Endothelial cell of umbilical vein (primary cell): ENCODE measurements at regions of chr6 and their contacts with region 1.

Region 1: DNA sequence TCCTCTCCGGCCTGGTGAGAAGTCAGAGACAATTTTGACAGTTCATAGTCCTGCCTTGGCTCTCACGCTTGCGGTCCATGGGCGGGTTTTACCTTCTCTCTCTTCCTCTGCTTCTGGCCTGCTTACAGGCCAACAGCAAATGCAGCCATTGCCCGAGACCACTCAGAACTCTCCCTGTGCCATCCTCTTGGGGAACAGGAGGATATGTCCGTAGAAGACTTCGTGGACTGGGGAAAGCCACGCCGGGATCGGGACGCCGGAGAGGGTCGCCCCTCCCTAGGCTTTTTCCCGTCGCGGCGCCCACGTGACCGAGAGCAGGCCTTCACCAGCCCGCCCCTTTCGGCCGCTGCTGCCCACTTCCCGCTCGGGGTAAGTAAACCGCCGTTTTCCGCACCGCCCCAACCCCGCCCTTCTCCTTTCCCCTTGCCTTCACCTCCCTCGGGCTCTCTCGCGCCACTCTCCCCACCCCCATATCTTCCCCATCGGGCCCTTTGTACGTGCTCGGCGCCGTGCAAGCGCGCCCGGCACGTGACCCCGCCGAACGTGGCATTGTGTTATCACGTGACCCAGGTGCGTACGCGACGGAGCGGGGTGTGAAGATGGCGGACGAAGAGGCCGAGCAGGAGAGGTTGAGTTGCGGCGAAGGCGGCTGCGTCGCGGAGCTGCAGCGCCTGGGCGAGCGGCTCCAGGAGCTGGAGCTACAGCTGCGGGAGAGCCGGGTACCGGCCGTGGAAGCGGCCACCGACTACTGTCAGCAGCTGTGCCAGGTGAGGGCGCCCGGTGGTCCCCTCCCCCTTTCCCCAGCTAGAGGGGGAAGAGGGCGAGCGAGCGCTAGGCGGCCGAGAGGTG is at the start of gene ZNF292:
- DNase-seq: peak; percentile 98
- H3K4me3 ChIP-seq: peak within 1 kb of the TSS; percentile 60 to 91 (median 89)
- H3K27ac ChIP-seq: peak within 1 kb of the TSS; percentile 96
- H3K4me1 ChIP-seq: peaks cover 35% of the 10 kb centered on the region
- H3K27me3 ChIP-seq: no peaks in the 10 kb centered on the region
- CTCF ChIP-seq: no peak
- POLR2A ChIP-seq: no peak
- total RNA-seq, gene ZNF292: 23.8 and 24.9 TPM in 2 replicates

Region 2: DNA sequence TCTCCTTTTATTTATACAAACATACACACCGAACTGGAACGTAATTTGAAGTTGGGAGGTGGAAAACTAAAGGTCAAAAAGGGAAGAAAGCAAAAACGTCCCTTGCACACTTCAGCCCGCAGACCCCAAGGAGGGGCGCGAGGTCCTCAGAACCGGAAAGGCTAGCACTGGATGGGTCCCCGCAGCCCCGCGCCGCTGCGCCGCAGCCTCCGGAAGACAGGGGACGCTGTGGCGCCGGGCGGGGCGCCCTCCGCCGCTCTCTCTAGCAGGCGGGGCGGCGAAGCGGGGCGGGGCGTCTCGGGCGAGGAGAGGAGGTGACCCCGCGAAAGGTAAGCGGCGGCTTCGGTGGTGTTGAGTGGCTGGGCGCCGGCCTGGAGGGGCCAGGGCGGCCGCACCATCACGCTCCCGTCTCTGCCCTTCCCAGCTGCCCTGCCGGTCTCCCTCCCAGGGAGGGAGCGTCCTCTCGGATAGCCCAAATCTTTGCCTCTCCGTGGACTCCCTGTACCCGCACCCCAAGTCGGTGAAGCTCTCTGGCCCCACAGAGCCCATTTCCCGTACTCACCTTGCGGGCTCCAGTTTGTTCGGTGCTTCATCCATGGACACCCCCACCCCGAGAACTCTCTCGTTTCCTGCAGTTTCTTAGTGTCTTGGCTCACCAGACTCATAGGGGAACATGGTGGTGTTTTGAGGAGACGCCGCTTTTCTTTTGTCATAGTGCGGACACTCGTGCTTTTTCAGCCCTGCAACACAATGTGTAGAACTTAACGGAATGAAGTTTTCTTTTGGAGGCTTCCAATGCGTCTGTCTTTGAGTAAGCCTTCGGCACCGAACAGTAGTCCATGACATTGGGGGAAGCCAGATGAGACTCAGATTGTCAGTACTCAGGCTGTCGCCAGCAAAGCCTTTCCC is 167.3 kb after region 1 on chr6 and contains the start of gene SMIM8:
- CTCF ChIA-PET with region 1: no interaction called
- POLR2A ChIA-PET with region 1: no interaction called
- dilution Hi-C with region 1: no loop called
- intact Hi-C with region 1: loop called (anchors 5 kb)
- DNase-seq: peak; percentile 67
- H3K4me3 ChIP-seq: peak within 1 kb of the TSS; percentile 84 to 99 (median 94)
- H3K27ac ChIP-seq: peak within 1 kb of the TSS; percentile 9
- H3K4me1 ChIP-seq: peaks cover 3% of the 10 kb centered on the region
- H3K27me3 ChIP-seq: peaks cover 2 to 4% of the 10 kb centered on the region in 2 experiments
- CTCF ChIP-seq: peak; percentile 95 to 99
- POLR2A ChIP-seq: peak; percentile 77
- total RNA-seq, gene SMIM8: 8.2 and 8.4 TPM in 2 replicates

Region 3: DNA sequence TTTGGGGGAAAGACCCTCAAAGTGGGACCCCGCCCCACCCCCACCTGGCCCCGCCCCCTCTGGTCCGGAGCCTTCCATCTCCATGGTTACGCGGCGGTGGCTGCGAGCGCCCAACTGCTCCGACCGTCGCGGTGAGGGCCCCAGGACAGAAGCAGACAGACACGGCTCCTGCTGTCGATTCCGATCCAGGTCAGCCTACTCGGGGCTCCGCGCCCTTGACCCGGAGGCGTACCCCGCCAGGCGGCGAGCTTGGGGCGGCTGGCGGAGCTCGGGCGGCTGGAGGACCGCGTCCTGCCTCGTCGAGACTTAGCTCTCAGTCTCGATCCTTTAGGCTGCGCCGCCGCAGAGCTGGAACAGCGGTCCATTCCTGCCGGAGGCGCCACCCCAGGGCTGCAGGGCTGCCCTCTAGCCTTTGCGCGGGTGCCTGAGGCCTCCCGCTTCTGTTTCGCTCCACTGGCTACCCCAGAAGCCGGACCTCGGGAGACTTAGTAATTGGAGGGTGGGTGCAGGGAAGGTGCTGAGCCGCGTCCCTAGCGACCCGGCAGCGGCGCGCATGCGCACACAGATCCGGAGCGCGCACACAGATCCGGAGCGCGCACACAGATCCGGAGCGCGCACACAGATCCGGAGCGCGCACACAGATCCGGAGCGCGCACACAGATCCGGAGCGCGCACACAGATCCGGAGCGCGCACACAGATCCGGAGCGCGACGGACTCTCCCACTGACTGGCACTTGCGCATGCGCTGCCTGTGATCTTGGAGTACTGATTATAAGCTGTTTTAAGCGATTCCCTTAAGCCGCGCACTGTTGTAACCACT is 252.9 kb after region 1 on chr6 and contains the start of gene CFAP206:
- CTCF ChIA-PET with region 1: no interaction called
- POLR2A ChIA-PET with region 1: no interaction called
- dilution Hi-C with region 1: no loop called
- intact Hi-C with region 1: loop called (anchors 2 kb)
- DNase-seq: peak; percentile 95
- H3K4me3 ChIP-seq: peak within 1 kb of the TSS; percentile 87 to 97 (median 96)
- H3K27ac ChIP-seq: peak within 1 kb of the TSS; percentile 48
- H3K4me1 ChIP-seq: peaks cover 10% of the 10 kb centered on the region
- H3K27me3 ChIP-seq: peaks cover 0 to 5% of the 10 kb centered on the region in 2 experiments
- CTCF ChIP-seq: peak in 1 of 2 donors; percentile 15
- POLR2A ChIP-seq: no peak
- total RNA-seq, gene CFAP206: 0.20 and 0.21 TPM in 2 replicates

Region 4: GRCh38 chr6:87472525-87473418 is 317.6 kb after region 1 on chr6 and contains the start of gene SLC35A1:
- CTCF ChIA-PET with region 1: no interaction called
- POLR2A ChIA-PET with region 1: no interaction called
- dilution Hi-C with region 1: no loop called
- intact Hi-C with region 1: loop called (anchors 1 kb)
- DNase-seq: peak; percentile 88
- H3K4me3 ChIP-seq: peak within 1 kb of the TSS; percentile 53 to 91 (median 90)
- H3K27ac ChIP-seq: peak within 1 kb of the TSS; percentile 91
- H3K4me1 ChIP-seq: peaks cover 8% of the 10 kb centered on the region
- H3K27me3 ChIP-seq: peaks cover 2% of the 10 kb centered on the region in 2 experiments
- CTCF ChIP-seq: no peak
- POLR2A ChIP-seq: peak; percentile 86
- total RNA-seq, gene SLC35A1: 12.9 and 13.0 TPM in 2 replicates

Region 5: GRCh38 chr6:87589693-87590549 is 434.7 kb after region 1 on chr6 and contains the starts of genes ORC3 and RARS2:
- CTCF ChIA-PET with region 1: no interaction called
- POLR2A ChIA-PET with region 1: no interaction called
- dilution Hi-C with region 1: no loop called
- intact Hi-C with region 1: loop called (anchors 10 kb)
- DNase-seq: peak; percentile 95
- H3K4me3 ChIP-seq: peak within 1 kb of the TSS; percentile 82 to 96 (median 94)
- H3K27ac ChIP-seq: peak within 1 kb of the TSS; percentile 53
- H3K4me1 ChIP-seq: peaks cover 16% of the 10 kb centered on the region
- H3K27me3 ChIP-seq: no peaks in the 10 kb centered on the region
- CTCF ChIP-seq: no peak
- POLR2A ChIP-seq: peak; percentile 78
- total RNA-seq, gene ORC3: 17.9 and 20.1 TPM in 2 replicates
- total RNA-seq, gene RARS2: 33.7 and 34.0 TPM in 2 replicates

Region 6: GRCh38 chr6:88238065-88238464 is 1082.8 kb after region 1 on chr6:
- CTCF ChIA-PET with region 1: no interaction called
- POLR2A ChIA-PET with region 1: no interaction called
- dilution Hi-C with region 1: no loop called
- intact Hi-C with region 1: no loop called
- DNase-seq: peak; percentile 3
- H3K4me3 ChIP-seq: no peak overlapping the region
- H3K27ac ChIP-seq: no peak overlapping the region
- H3K4me1 ChIP-seq: no peaks in the 10 kb centered on the region
- H3K27me3 ChIP-seq: no peaks in the 10 kb centered on the region
- CTCF ChIP-seq: no peak
- POLR2A ChIP-seq: no peak